ENCODE measurements at regions of chr22 and their contacts with region 1.

Region 1: DNA sequence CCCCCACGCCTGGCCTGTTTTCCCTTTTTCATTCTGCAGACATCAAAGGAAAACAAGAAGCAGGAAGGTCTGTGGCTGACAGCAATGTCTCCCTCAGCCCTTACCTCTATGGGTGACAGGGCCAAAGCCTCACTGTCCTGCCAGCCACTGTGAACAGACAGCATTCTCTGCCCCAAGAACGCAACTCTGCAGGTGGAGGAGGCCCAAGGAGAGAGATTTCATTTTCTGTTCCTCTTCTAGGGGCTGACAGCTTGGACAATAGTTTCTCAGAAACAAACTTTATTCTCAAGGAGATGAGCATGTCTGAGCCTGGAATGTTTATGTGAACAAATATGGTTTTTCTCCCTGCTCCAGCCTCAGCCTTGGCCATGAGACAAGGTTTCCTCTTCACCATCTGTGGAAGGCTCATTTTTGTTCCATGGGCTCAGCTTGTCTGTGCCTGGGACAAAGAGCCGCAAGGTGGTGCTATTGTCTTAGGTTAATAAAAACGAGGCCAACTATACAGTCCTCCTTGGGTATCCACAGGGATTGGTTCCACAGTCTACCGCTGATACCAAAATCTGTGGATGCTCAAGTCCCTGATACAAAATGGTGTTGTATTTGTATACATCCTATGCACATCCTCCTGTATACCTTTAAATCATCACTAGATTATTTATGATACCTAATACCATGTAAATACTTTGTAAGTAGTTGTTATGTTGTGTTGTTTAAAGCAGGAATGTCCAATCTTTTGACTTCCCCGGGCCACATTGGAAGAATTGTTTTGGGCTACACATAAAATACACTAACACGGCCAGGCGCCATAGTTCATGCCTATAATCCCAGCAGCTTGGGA is 5.8 kb downstream of the PIWIL3 start:
- DNase-seq: peak; percentile 73
- H3K4me3 Mint-ChIP-seq: no peak overlapping the region
- H3K27ac Mint-ChIP-seq: no peak overlapping the region
- H3K4me1 Mint-ChIP-seq: no peaks in the 10 kb centered on the region
- H3K27me3 Mint-ChIP-seq: peaks cover 28% of the 10 kb centered on the region
- CTCF ChIP-seq: peak; percentile 44

Region 2: GRCh38 chr22:24367841-24368240 is 400.9 kb before region 1 on chr22:
- CTCF ChIA-PET with region 1: no interaction called
- intact Hi-C with region 1: no loop called
- DNase-seq: no peak
- H3K4me3 Mint-ChIP-seq: no peak overlapping the region
- H3K27ac Mint-ChIP-seq: no peak overlapping the region
- H3K4me1 Mint-ChIP-seq: no peaks in the 10 kb centered on the region
- H3K27me3 Mint-ChIP-seq: no peaks in the 10 kb centered on the region
- CTCF ChIP-seq: no peak

Region 3: DNA sequence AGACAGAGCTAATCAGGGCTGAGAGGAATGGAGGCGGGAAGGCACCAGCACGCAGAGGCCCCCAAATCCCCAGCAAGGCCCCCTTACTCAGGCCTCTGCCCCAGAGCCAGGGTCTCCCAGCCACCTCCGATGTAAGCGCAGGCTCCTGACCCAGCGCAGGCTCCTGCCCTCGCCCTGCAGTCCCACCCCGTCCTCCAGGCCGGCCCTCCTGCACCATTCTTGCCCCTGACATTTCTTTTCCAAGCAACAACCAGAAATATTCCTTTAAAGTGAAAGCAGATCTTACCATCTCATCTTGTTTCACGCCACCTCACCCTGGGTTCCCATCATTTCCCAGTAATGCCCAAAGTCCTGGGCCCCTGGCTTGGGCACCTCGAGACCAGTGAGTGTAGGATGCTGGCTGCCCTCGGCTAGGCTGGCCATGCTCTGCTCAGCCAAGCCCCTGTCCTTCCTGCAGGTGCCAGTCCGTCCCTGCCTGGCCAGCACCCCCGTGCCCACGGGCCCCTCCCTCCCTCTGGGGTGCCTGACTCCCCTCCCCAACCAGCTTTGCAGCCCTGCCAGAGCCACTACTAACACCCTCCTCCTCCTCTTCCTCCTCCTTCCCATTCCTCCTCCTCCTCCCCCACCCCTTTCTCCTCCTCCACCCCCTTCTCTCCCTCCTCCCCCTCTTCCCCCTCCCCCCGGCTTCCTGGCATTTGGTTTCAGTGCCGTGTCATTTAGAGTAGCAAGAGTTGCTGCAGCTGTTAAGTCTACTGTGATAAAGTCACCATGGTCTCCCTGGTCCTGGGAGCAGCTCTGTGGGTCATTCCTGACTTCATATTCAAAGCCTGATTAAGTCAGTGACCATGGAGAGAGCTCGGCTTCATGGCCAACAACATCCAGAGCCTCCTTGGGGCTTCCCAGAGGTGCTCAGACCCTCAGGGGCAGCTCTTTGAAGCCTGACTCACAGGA is 72.9 kb before region 1 on chr22:
- CTCF ChIA-PET with region 1: no interaction called
- intact Hi-C with region 1: no loop called
- DNase-seq: no peak
- H3K4me3 Mint-ChIP-seq: no peak overlapping the region
- H3K27ac Mint-ChIP-seq: no peak overlapping the region
- H3K4me1 Mint-ChIP-seq: no peaks in the 10 kb centered on the region
- H3K27me3 Mint-ChIP-seq: peaks cover 37% of the 10 kb centered on the region
- CTCF ChIP-seq: no peak

Region 4: GRCh38 chr22:24836282-24836681 is 67.5 kb after region 1 on chr22:
- CTCF ChIA-PET with region 1: interaction called, 7 read pairs
- intact Hi-C with region 1: loop called (anchors 2 kb)
- DNase-seq: no peak
- H3K4me3 Mint-ChIP-seq: no peak overlapping the region
- H3K27ac Mint-ChIP-seq: no peak overlapping the region
- H3K4me1 Mint-ChIP-seq: no peaks in the 10 kb centered on the region
- H3K27me3 Mint-ChIP-seq: peaks cover 72% of the 10 kb centered on the region
- CTCF ChIP-seq: no peak

Region 5: GRCh38 chr22:24845041-24845898 is 76.5 kb after region 1 on chr22:
- CTCF ChIA-PET with region 1: interaction called, 31 read pairs
- intact Hi-C with region 1: loop called (anchors 2 kb)
- DNase-seq: peak; percentile 12
- H3K4me3 Mint-ChIP-seq: no peak overlapping the region
- H3K27ac Mint-ChIP-seq: no peak overlapping the region
- H3K4me1 Mint-ChIP-seq: no peaks in the 10 kb centered on the region
- H3K27me3 Mint-ChIP-seq: peaks cover 93% of the 10 kb centered on the region
- CTCF ChIP-seq: no peak

Region 6: GRCh38 chr22:24938741-24939341 is 170.1 kb after region 1 on chr22:
- CTCF ChIA-PET with region 1: interaction called, 3 read pairs
- intact Hi-C with region 1: loop called (anchors 2 kb)
- DNase-seq: peak; percentile 57
- H3K4me3 Mint-ChIP-seq: no peak overlapping the region
- H3K27ac Mint-ChIP-seq: no peak overlapping the region
- H3K4me1 Mint-ChIP-seq: peaks cover 2% of the 10 kb centered on the region
- H3K27me3 Mint-ChIP-seq: no peaks in the 10 kb centered on the region
- CTCF ChIP-seq: peak; percentile 70

Region 7: DNA sequence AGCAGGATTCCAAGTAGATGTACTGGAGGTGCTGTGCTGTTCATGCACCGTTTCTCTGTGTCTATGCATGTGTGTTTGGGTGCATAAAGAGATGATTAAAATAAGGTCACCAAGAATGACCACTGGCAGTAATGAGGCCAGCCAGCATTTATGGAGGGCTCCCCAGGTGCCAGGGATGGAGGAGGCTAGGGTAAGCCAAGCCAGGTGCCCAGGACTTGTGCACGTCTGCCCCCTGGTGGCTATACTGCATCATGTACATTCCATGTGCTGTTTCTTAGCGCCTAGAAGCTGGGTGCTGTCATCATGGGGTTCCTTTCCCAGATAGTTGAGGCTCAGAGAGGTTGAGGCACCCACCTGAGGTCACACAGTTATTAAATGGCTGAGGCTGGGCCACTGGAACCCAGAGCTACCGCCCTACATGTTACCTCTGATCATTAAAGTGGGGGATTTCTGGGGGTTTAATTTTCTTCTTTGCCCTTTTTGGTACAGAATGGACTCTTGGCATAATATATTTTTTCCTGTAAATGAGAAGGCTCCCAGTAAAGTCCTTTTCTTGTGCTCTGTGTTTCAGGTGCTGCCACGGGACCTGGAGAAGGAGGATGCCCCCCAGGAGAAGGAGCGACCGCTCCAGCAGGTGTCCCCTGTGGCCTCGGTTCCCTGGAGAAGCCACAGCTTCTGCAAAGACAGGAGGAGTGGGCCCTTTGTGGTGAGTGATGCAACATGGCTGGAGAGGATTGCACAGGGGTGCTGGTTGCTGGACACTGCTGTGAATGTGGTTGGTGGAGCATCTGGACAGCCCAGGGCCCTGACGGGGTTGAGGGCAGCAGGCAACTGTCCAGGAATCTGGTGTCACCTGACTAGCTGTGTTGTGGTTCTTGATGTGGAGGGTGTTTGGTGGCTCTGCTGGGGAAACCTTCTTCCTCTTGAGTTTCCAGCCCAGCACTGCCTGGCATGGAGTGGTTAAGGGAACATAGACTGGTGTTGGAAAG is 280.2 kb after region 1 on chr22:
- CTCF ChIA-PET with region 1: no interaction called
- intact Hi-C with region 1: loop called (anchors 2 kb)
- DNase-seq: peak; percentile 83
- H3K4me3 Mint-ChIP-seq: no peak overlapping the region
- H3K27ac Mint-ChIP-seq: no peak overlapping the region
- H3K4me1 Mint-ChIP-seq: peaks cover 8% of the 10 kb centered on the region
- H3K27me3 Mint-ChIP-seq: no peaks in the 10 kb centered on the region
- CTCF ChIP-seq: peak; percentile 95

Measured in Calu3 (cell line).